ENCODE measurements at regions of chr18 and their contacts with region 1.

Region 1: GRCh38 chr18:36296650-36297416 is 680 bp upstream of the FHOD3 start:
- DNase-seq: peak; percentile 78
- H3K4me3 ChIP-seq: peak overlapping the region; percentile 46 to 89 (median 74)
- H3K27ac ChIP-seq: peak overlapping the region; percentile 43 to 81 (median 74)
- H3K4me1 ChIP-seq: peaks cover 0 to 26% (median 20%) of the 10 kb centered on the region in 4 donors
- H3K27me3 ChIP-seq: peaks cover 0 to 4% (median 0%) of the 10 kb centered on the region in 3 donors
- CTCF ChIP-seq: peak in 1 of 4 experiments; percentile 18
- EP300 ChIP-seq: no peak
- POLR2A ChIP-seq: no peak

Region 2: DNA sequence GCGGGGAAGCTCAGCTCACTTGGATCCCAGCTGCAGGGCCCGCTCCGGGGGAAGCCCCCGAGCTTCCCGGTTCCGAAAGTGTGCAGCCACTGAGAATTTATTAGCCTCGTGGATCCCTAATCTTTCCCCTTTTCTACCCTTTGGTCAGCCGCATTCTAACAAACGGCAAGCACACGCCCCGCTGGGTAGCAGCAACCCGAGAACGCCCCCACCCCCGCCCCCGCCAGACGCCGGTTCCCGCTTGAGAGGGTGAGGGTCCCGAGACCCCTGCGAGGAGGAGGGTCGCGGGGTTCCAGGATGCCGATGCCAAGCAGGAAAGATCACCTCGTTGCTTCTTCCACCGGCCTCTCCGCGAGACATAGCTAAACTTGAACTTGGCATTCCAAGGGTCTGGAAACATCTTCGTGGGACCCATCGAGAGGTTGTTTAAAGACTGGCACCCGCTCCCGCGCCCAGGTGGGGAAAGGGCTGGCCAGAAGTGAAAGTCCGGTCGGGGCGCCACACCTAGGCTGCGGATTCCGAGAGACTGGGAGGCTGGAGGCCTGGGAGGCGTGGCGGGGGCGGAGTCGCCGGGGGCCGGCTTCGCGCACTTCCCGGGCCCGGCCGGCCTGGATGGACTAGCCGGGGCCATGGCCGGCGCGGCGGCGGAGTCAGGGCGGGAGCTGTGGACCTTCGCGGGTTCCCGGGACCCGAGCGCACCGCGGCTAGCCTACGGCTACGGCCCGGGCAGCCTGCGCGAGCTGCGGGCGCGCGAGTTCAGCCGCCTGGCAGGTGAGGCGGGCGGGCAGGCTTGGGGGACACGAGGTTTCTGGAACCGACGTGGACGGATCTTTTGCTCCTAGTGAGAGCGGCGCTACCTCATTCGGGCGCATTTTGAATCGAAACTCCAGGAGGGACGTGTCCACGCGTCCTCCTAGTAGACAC is 109.7 kb before region 1 on chr18 and contains the start of gene MOCOS:
- intact Hi-C with region 1: loop called (anchors 10 kb)
- DNase-seq: peak; percentile 86
- H3K4me3 ChIP-seq: peak within 1 kb of the TSS; percentile 52 to 74 (median 69)
- H3K27ac ChIP-seq: peak within 1 kb of the TSS in 3 of 4 donors; percentile 32 to 49 (median 39)
- H3K4me1 ChIP-seq: peaks cover 0 to 21% (median 16%) of the 10 kb centered on the region in 4 donors
- H3K27me3 ChIP-seq: no peaks in the 10 kb centered on the region
- CTCF ChIP-seq: no peak
- EP300 ChIP-seq: no peak
- POLR2A ChIP-seq: no peak
- total RNA-seq, gene MOCOS: 0.49 to 1.8 (median 1.0) TPM

Region 3: DNA sequence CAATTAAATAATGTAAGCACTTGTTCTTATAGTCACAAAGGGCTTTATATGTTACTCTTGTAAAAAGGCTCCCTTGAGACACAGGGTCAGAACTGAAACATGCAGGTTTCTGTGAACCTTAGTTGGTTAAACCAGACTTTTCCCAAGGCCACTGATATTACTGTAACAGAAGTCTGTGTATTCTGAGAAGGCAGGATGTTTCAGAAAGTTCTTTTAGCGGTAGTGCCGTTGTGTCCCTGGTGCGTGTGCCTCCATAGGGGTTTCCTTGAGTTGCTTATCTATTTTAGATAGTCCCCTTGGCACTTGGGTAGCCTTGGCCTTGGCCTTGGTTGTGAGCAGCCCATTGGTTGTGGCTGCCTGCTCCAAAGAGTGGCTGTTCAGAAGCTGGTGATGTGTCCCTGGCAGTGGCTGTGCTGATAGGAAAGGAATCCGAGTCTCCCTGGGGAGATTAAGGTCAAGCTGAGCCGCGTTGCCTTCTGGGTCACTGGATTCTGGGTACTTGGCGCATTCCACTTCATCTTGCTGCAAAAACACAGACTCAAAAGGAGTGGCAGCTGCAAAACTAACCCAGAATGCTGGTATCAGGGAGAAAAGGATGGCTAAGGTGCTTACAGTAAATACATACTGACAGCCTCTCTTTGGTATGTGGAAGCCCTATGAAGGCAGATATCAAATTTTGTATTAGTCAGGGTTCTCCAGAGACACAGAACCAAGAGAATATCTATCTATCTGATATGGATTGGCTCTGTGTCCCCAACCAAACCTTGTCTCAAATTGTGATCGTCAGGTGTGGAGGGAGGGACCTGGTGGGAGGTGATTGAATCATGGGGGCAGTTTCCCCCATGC is 70.4 kb after region 1 on chr18:
- intact Hi-C with region 1: no loop called
- DNase-seq: no peak
- H3K4me3 ChIP-seq: no peak overlapping the region
- H3K27ac ChIP-seq: no peak overlapping the region
- H3K4me1 ChIP-seq: no peaks in the 10 kb centered on the region
- H3K27me3 ChIP-seq: no peaks in the 10 kb centered on the region
- CTCF ChIP-seq: no peak
- EP300 ChIP-seq: no peak
- POLR2A ChIP-seq: no peak

Region 4: DNA sequence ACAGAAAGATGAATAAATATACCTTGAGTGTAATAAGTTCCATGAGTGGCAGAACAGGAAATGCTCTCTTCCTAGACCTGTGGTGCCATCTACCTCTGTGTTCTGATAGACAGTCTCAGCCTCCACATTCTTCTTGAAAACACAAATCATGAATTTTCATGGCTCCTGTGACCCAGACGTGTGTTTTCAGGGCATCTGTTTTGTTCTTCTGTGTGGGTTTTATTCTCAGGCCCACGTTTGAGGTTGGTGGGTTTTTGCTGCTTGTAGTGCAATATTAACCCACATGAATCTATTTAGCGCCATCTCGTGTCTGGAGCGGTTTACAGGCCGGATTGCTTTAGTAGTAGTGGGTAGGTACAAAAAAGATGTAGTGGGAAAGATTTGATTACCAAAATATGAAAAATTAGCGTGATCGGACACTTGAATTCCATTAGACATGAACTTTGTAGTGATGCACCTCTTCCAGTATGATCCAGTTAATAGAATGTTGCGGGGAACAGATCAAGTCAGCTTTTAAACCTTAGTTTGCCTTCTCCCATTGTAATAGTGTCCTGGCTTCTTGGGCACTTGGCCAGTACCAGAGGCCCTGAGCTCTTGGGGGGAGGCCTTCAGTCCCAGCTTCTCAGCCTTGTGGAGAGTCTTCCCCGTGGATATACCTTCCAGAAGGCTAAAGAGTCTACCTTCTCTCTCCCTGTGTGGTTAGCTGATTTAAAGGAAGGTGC is 275.5 kb after region 1 on chr18:
- intact Hi-C with region 1: loop called (anchors 2 kb)
- DNase-seq: no peak
- H3K4me3 ChIP-seq: no peak overlapping the region
- H3K27ac ChIP-seq: no peak overlapping the region
- H3K4me1 ChIP-seq: no peaks in the 10 kb centered on the region
- H3K27me3 ChIP-seq: no peaks in the 10 kb centered on the region
- CTCF ChIP-seq: peak in 2 of 4 experiments; percentile 21 to 29
- EP300 ChIP-seq: no peak
- POLR2A ChIP-seq: no peak

Region 5: GRCh38 chr18:37997695-37998094 is 1700.9 kb after region 1 on chr18:
- intact Hi-C with region 1: no loop called
- DNase-seq: no peak
- H3K4me3 ChIP-seq: no peak overlapping the region
- H3K27ac ChIP-seq: no peak overlapping the region
- H3K4me1 ChIP-seq: no peaks in the 10 kb centered on the region
- H3K27me3 ChIP-seq: no peaks in the 10 kb centered on the region
- CTCF ChIP-seq: no peak
- EP300 ChIP-seq: no peak
- POLR2A ChIP-seq: no peak